Posterior cingulate gyrus (tissue), 11 donors: ENCODE measurements at regions of chr9 and their contacts with region 1.

Region 1: GRCh38 chr9:72038890-72039410 is 21.5 kb downstream of the C9orf57 start:
- DNase-seq: peak; percentile 60 to 95 (median 85)

Region 2: GRCh38 chr9:72271613-72272478 is 232.9 kb after region 1 on chr9:
- intact Hi-C with region 1: loop called (anchors 1 kb)
- DNase-seq: peak in 4 of 10 donors; percentile 30 to 54 (median 46)